CD8-positive, alpha-beta T cell (primary cell): ENCODE measurements at regions of chr22 and their contacts with region 1.

Region 1: DNA sequence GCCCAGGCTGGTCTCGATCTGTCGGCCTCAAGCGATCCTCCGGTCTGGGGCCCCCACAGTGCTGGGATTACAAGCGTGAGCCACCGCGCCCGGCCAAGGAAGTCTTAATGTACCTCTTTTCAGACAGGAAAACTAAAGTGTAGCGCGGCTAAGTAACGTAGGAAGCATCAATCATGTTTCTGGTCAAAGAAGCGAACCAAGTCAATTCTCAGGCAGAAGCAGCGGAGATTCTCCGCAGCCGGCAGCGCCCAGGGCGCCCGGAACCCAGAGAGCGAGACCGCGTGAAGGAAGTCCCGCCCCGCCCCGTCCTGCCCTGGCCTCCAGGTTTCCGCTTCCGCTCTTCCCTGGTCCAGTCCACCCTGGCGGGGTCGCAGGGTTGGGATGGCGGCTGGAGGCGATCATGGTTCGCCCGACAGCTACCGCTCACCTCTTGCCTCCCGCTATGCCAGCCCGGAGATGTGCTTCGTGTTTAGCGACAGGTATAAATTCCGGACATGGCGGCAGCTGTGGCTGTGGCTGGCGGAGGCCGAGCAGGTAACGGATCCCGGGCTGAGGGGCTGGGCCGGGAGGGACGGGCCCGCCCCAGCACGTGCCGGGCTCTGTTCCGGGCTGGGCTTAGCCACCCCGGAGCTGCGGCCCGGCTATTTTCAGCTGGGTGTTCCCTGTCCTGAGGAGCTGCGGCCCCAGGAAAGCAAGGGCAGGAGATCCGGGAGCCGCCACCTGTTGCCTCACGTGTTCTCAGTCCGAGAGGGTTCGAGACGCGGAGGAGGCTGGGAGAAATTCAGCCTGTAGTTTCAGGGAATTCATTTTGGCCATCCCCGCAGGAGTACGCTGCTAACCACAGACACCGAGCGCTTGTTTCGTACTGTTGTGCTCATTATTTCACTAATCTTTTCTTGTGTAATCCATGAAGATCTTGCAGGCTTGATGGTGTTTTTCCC is at the start of gene ADSL:
- DNase-seq: peak; percentile 60 to 91 (median 83)
- ATAC-seq: peak; percentile 76
- H3K4me3 ChIP-seq: peak within 1 kb of the TSS; percentile 73 to 90
- H3K4me3 Mint-ChIP-seq: peak within 1 kb of the TSS; percentile 97
- H3K27ac ChIP-seq: peak within 1 kb of the TSS; percentile 74 to 82
- H3K27ac Mint-ChIP-seq: peak within 1 kb of the TSS; percentile 99
- H3K4me1 ChIP-seq: peaks cover 45% of the 10 kb centered on the region
- H3K4me1 Mint-ChIP-seq: peaks cover 60% of the 10 kb centered on the region
- H3K27me3 ChIP-seq: no peaks in the 10 kb centered on the region
- H3K27me3 Mint-ChIP-seq: no peaks in the 10 kb centered on the region
- CTCF ChIP-seq: no peak
- total RNA-seq, gene ADSL: 61.8 to 68.7 TPM

Region 2: DNA sequence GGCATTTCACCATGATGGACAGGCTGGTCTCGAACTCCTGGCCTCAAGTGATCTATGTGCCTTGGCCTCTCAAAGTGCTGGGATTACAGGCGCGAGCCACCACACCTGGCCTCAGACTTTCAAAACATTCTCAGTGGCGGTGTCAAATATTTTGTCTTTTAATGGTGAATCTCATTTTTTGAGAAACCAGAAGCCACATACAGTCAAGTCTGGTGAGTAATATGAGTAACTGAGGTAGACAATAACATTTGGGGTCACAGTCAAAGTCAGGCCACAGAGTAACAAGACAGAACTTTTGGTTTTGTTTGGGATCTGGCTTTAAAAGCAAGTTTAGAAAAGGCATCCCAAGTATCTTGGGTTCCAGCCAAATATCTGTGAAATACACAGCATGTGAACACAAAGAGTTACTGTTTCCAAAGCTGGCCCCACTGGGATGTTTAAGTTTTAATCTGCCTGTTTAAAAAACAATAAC is 391.8 kb before region 1 on chr22:
- CTCF ChIA-PET with region 1: interaction called, 3 read pairs
- POLR2A ChIA-PET with region 1: no interaction called
- intact Hi-C with region 1: loop called (anchors 5 to 10 kb)
- DNase-seq: no peak
- ATAC-seq: no peak
- H3K4me3 ChIP-seq: no peak overlapping the region
- H3K4me3 Mint-ChIP-seq: no peak overlapping the region
- H3K27ac ChIP-seq: peak overlapping the region in 1 of 2 experiments; percentile 31
- H3K27ac Mint-ChIP-seq: peak overlapping the region; percentile 92
- H3K4me1 ChIP-seq: peaks cover 94% of the 10 kb centered on the region
- H3K4me1 Mint-ChIP-seq: peaks cover 88% of the 10 kb centered on the region
- H3K27me3 ChIP-seq: no peaks in the 10 kb centered on the region
- H3K27me3 Mint-ChIP-seq: no peaks in the 10 kb centered on the region
- CTCF ChIP-seq: no peak

Region 3: GRCh38 chr22:40044102-40044869 is 302.2 kb before region 1 on chr22:
- CTCF ChIA-PET with region 1: interaction called, 37 read pairs
- POLR2A ChIA-PET with region 1: interaction called, 62 read pairs
- intact Hi-C with region 1: loop called (anchors 1 kb)
- DNase-seq: peak; percentile 95 to 100 (median 99)
- ATAC-seq: peak; percentile 86
- H3K4me3 ChIP-seq: peak overlapping the region; percentile 80 to 84
- H3K4me3 Mint-ChIP-seq: peak overlapping the region; percentile 94
- H3K27ac ChIP-seq: peak overlapping the region; percentile 97 to 98
- H3K27ac Mint-ChIP-seq: peak overlapping the region; percentile 100
- H3K4me1 ChIP-seq: peaks cover 28% of the 10 kb centered on the region
- H3K4me1 Mint-ChIP-seq: peaks cover 39% of the 10 kb centered on the region
- H3K27me3 ChIP-seq: no peaks in the 10 kb centered on the region
- H3K27me3 Mint-ChIP-seq: peaks cover 8% of the 10 kb centered on the region
- CTCF ChIP-seq: no peak

Region 4: DNA sequence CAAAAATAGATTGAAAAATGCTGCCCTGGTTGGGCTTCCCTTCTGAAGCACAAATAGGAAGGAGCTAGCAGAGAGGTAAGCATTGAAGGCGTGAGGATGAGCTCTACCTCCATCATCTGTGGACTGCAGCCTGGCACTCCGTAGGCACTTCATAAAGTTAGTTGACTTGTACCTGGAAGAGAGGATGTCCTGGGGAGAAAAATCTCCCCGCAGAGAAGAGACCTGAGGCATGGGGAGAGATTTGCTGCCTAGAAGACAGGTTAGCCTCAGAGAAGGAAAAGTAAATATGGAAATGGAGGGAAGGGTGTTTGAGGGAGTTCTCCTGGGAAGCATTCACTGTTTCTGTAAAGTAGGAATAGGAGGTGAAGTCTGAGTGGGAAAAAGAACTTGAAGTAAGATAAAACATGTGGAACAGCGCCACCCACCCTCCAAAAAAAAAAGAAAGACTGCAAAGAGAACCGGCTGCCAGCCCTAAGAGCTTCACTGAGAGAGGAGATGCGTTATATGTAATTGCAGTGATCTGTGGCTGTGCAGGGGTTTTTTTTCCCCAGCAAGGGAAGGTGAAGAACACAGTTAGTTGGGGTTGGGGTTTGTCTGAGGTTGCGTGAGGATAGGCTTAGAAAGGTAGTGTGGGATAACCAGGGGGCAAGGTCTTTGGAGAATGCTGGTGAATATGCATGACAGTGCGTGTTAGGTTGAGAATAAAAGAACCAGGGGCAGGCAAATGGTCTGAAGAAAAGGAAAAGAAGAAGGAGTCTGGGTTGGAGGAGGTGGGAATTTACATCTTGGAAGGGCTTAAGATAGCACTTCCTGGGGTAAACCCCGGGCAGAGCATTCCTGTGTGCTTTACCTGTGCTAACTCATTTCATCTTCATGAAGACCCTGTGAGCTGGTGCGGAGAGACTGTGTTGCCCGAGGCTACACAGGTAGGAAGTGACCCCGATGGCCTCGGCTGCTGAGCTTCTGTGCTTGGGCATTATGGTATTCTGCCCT is 152.7 kb before region 1 on chr22:
- CTCF ChIA-PET with region 1: interaction called, 17 read pairs
- POLR2A ChIA-PET with region 1: no interaction called
- intact Hi-C with region 1: no loop called
- DNase-seq: peak in 1 of 9 experiments; percentile 52
- ATAC-seq: peak; percentile 61
- H3K4me3 ChIP-seq: no peak overlapping the region
- H3K4me3 Mint-ChIP-seq: peak overlapping the region; percentile 32
- H3K27ac ChIP-seq: peak overlapping the region in 1 of 2 experiments; percentile 4
- H3K27ac Mint-ChIP-seq: peak overlapping the region; percentile 82
- H3K4me1 ChIP-seq: peaks cover 50% of the 10 kb centered on the region
- H3K4me1 Mint-ChIP-seq: peaks cover 82% of the 10 kb centered on the region
- H3K27me3 ChIP-seq: no peaks in the 10 kb centered on the region
- H3K27me3 Mint-ChIP-seq: no peaks in the 10 kb centered on the region
- CTCF ChIP-seq: peak; percentile 45

Region 5: GRCh38 chr22:40276996-40277823 is 69.2 kb before region 1 on chr22:
- CTCF ChIA-PET with region 1: interaction called, 14 read pairs
- POLR2A ChIA-PET with region 1: interaction called, 3 read pairs
- intact Hi-C with region 1: loop called (anchors 1 to 5 kb)
- DNase-seq: no peak
- ATAC-seq: no peak
- H3K4me3 ChIP-seq: peak overlapping the region in 1 of 2 experiments; percentile 72
- H3K4me3 Mint-ChIP-seq: peak overlapping the region; percentile 29
- H3K27ac ChIP-seq: peak overlapping the region; percentile 72 to 76
- H3K27ac Mint-ChIP-seq: peak overlapping the region; percentile 49
- H3K4me1 ChIP-seq: peaks cover 27% of the 10 kb centered on the region
- H3K4me1 Mint-ChIP-seq: peaks cover 49% of the 10 kb centered on the region
- H3K27me3 ChIP-seq: no peaks in the 10 kb centered on the region
- H3K27me3 Mint-ChIP-seq: no peaks in the 10 kb centered on the region
- CTCF ChIP-seq: no peak

Region 6: GRCh38 chr22:40332319-40332781 is 14.1 kb before region 1 on chr22:
- CTCF ChIA-PET with region 1: interaction called, 36 read pairs
- POLR2A ChIA-PET with region 1: interaction called, 39 read pairs
- intact Hi-C with region 1: loop called (anchors 1 kb)
- DNase-seq: peak in 3 of 9 experiments; percentile 34 to 62 (median 57)
- ATAC-seq: peak; percentile 72
- H3K4me3 ChIP-seq: no peak overlapping the region
- H3K4me3 Mint-ChIP-seq: peak overlapping the region; percentile 52
- H3K27ac ChIP-seq: peak overlapping the region; percentile 6 to 30
- H3K27ac Mint-ChIP-seq: peak overlapping the region; percentile 92
- H3K4me1 ChIP-seq: peaks cover 90% of the 10 kb centered on the region
- H3K4me1 Mint-ChIP-seq: peaks cover 95% of the 10 kb centered on the region
- H3K27me3 ChIP-seq: no peaks in the 10 kb centered on the region
- H3K27me3 Mint-ChIP-seq: no peaks in the 10 kb centered on the region
- CTCF ChIP-seq: no peak

Region 7: GRCh38 chr22:40746428-40747220 is 400.2 kb after region 1 on chr22:
- CTCF ChIA-PET with region 1: no interaction called
- POLR2A ChIA-PET with region 1: no interaction called
- intact Hi-C with region 1: no loop called
- DNase-seq: no peak
- ATAC-seq: no peak
- H3K4me3 ChIP-seq: no peak overlapping the region
- H3K4me3 Mint-ChIP-seq: no peak overlapping the region
- H3K27ac ChIP-seq: no peak overlapping the region
- H3K27ac Mint-ChIP-seq: no peak overlapping the region
- H3K4me1 ChIP-seq: no peaks in the 10 kb centered on the region
- H3K4me1 Mint-ChIP-seq: no peaks in the 10 kb centered on the region
- H3K27me3 ChIP-seq: no peaks in the 10 kb centered on the region
- H3K27me3 Mint-ChIP-seq: no peaks in the 10 kb centered on the region
- CTCF ChIP-seq: no peak